Sigmoid colon (tissue), 7 donors: ENCODE measurements at regions of chr10 and their contacts with region 1.

Region 1: DNA sequence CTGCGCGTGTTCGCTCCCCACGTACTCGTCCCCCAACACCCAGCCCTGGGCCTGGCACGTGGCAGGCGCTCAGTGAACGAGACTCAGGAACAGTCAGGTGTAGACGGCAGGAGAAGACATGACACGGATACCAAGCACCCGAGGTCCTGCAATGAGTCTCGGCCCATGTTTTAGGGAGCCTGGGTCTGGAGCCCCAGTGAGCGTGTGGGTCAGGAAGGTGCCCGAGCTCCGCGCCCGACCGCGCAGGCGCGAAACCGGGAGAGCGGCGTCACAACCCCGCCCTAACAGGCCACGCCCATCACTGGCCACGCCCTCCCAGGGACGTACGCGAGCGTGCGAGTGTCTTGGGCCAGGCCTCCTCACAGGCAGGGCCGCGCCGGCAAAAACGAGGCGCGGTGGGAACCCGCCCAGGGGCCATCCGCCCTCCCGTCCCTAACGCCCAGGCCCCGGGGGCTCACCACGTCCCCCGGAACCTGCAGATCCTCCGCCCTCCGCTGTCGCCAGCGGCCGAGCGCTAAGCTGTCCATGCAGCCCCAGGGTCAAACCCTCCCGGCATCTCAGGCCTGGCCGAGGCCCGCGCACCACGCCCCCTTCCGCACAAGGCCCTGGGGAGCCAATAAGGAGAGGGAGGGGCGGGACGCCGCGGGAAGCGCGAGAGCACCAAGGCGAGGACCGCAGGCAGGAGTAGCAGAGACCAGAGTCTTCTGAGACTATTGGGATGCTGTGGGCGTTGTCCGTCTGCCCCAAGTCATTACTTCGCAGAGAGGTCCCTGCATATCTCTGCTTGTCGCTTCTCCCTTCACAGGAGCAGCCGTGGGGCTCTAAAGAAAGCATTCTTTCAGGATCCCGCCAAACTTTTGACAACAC is at the start of gene C10orf143:
- DNase-seq: peak; percentile 99
- H3K4me3 ChIP-seq: peak within 1 kb of the TSS; percentile 68 to 84 (median 76)
- H3K27ac ChIP-seq: peak within 1 kb of the TSS; percentile 88 to 99 (median 96)
- H3K4me1 ChIP-seq: peaks cover 0 to 28% (median 24%) of the 10 kb centered on the region in 4 donors
- H3K27me3 ChIP-seq: no peaks in the 10 kb centered on the region
- CTCF ChIP-seq: no peak
- EP300 ChIP-seq: no peak
- POLR2A ChIP-seq: peak; percentile 70 to 78
- total RNA-seq, gene C10orf143: 1.4 to 8.7 (median 4.7) TPM

Region 2: GRCh38 chr10:129848696-129849451 is 261.6 kb before region 1 on chr10:
- intact Hi-C with region 1: no loop called
- DNase-seq: no peak
- H3K4me3 ChIP-seq: no peak overlapping the region
- H3K27ac ChIP-seq: peak overlapping the region in 1 of 4 donors; percentile 46
- H3K4me1 ChIP-seq: no peaks in the 10 kb centered on the region
- H3K27me3 ChIP-seq: no peaks in the 10 kb centered on the region
- CTCF ChIP-seq: no peak
- EP300 ChIP-seq: no peak
- POLR2A ChIP-seq: no peak

Region 3: GRCh38 chr10:129963641-129964501 is 146.6 kb before region 1 on chr10 and contains the start of gene EBF3:
- intact Hi-C with region 1: loop called (anchors 5 kb)
- DNase-seq: peak; percentile 84
- H3K4me3 ChIP-seq: peak within 1 kb of the TSS; percentile 29 to 60 (median 50)
- H3K27ac ChIP-seq: peak within 1 kb of the TSS; percentile 54 to 78 (median 68)
- H3K4me1 ChIP-seq: peaks cover 0 to 65% (median 56%) of the 10 kb centered on the region in 4 donors
- H3K27me3 ChIP-seq: peaks cover 74 to 98% (median 87%) of the 10 kb centered on the region in 3 donors
- CTCF ChIP-seq: no peak
- EP300 ChIP-seq: no peak
- POLR2A ChIP-seq: no peak
- total RNA-seq, gene EBF3: 4.3 to 8.9 (median 5.8) TPM

Region 4: DNA sequence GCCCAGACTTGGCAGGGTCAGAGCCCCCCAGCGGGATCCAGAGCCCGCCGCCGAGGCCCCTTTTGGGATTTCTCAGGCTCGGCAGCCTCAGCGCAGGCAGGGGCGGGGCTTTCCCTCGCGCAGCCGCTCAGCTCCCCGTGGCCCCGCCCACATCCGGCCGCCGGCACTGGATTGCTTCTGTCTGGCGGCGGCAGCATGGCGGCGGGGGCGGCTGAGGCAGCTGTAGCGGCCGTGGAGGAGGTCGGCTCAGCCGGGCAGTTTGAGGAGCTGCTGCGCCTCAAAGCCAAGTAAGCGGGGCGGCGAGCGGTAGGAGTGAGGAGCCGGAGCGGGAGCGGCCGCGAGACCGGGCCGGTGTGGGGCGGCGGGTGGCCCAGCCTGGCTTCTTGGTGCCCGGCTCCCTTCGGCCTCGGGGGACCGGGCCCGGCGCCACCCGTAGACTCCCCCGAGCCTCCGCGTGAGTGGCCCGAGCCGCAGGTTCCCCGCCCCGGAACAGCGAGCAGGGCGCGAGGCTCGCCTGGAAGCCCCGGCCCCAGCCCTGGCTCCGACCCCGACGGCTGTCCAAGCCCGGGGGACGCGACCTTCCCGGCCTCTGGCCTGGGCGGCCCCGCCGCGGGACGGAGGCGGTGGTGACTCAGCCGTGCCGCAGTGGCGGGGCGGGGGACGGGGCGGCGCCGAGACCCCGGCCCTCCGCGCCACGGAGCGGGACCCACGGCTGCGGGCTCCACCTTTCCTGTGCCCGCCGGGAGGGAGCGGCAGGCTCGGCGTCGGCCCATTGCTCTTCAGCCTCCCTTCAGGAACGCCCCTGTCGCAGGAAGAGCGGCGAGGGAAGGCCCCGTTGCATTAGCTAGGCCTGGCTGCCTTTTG is 26.0 kb after region 1 on chr10 and contains the start of gene GLRX3:
- intact Hi-C with region 1: loop called (anchors 1 kb)
- DNase-seq: peak; percentile 92
- H3K4me3 ChIP-seq: peak within 1 kb of the TSS; percentile 67 to 100 (median 96)
- H3K27ac ChIP-seq: peak within 1 kb of the TSS; percentile 78 to 92 (median 84)
- H3K4me1 ChIP-seq: peaks cover 0 to 51% (median 43%) of the 10 kb centered on the region in 4 donors
- H3K27me3 ChIP-seq: no peaks in the 10 kb centered on the region
- CTCF ChIP-seq: no peak
- EP300 ChIP-seq: no peak
- POLR2A ChIP-seq: peak; percentile 48 to 77
- total RNA-seq, gene GLRX3: 40.5 to 53.5 (median 46.9) TPM